Ovary (tissue), 10 donors: ENCODE measurements at regions of chr1 and their contacts with region 1.

Region 1: DNA sequence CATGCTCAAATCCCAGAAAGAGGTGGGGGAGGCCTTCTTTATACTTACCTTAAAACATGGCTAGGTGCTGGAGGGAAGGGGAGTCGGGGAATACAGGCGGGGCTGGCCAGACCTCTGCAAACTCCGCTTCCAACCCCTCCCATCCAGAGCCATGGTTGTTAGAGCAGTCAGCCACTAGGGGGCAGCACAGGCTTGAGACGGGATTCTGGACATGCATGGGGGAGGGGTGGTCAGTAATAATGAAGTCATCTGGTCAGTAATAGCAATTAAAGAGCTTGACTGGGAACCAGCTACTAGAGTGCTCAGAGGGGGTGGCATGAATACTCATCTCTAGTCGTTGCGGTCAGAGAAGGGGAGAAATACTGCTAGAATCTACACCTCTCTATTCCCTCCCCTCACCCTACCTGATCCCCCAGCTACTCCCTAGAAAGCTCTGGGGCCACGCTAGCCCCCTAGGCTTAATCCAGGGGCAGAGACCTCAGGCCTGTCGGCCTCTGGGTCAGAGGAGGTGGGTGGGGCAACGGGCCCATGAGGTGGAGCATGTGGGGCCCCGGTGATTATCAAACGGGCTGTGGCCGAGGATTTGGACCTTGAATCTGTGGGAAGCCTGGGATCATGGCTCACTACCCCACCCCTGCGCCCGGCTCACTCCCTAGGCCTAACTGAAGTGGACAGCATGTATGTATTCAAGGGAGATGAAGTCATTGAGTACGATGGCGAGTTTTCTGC is 2.9 kb downstream of the CASQ1 start:
- DNase-seq: peak; percentile 82 to 91 (median 91)
- H3K4me3 ChIP-seq: no peak overlapping the region
- H3K27ac ChIP-seq: no peak overlapping the region
- H3K4me1 ChIP-seq: peaks cover 1% of the 10 kb centered on the region
- H3K27me3 ChIP-seq: no peaks in the 10 kb centered on the region
- CTCF ChIP-seq: peak; percentile 91 to 98 (median 95)
- EP300 ChIP-seq: no peak
- POLR2A ChIP-seq: no peak

Region 2: GRCh38 chr1:160108888-160109662 is 84.2 kb before region 1 on chr1:
- intact Hi-C with region 1: loop called in 3 of 4 experiments (anchors 5 to 10 kb)
- DNase-seq: peak in 2 of 5 donors; percentile 50 to 77
- H3K4me3 ChIP-seq: no peak overlapping the region
- H3K27ac ChIP-seq: no peak overlapping the region
- H3K4me1 ChIP-seq: peaks cover 16% of the 10 kb centered on the region
- H3K27me3 ChIP-seq: no peaks in the 10 kb centered on the region
- CTCF ChIP-seq: no peak
- EP300 ChIP-seq: no peak
- POLR2A ChIP-seq: no peak

Region 3: DNA sequence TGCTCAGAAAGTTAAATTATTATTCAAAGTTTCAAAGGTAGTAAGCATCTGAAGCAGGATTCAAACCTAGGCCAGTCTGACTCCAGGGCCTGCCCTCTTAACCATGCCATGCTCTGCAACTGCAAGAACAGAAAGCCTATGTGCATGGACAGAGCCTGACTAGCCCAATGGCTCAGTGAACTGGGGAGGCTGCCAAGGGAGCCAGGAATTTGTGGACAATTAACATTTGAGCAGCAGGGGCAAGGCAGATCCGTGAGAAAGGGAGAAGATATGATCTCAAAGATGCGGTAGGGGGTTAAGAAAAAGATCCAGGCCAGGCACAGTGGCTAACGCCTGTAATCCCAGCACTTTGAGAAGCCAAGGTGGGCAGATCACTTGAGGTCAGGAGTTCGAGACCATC is 48.3 kb before region 1 on chr1:
- intact Hi-C with region 1: no loop called
- DNase-seq: no peak
- H3K4me3 ChIP-seq: no peak overlapping the region
- H3K27ac ChIP-seq: no peak overlapping the region
- H3K4me1 ChIP-seq: no peaks in the 10 kb centered on the region
- H3K27me3 ChIP-seq: no peaks in the 10 kb centered on the region
- CTCF ChIP-seq: no peak
- EP300 ChIP-seq: no peak
- POLR2A ChIP-seq: no peak

Region 4: DNA sequence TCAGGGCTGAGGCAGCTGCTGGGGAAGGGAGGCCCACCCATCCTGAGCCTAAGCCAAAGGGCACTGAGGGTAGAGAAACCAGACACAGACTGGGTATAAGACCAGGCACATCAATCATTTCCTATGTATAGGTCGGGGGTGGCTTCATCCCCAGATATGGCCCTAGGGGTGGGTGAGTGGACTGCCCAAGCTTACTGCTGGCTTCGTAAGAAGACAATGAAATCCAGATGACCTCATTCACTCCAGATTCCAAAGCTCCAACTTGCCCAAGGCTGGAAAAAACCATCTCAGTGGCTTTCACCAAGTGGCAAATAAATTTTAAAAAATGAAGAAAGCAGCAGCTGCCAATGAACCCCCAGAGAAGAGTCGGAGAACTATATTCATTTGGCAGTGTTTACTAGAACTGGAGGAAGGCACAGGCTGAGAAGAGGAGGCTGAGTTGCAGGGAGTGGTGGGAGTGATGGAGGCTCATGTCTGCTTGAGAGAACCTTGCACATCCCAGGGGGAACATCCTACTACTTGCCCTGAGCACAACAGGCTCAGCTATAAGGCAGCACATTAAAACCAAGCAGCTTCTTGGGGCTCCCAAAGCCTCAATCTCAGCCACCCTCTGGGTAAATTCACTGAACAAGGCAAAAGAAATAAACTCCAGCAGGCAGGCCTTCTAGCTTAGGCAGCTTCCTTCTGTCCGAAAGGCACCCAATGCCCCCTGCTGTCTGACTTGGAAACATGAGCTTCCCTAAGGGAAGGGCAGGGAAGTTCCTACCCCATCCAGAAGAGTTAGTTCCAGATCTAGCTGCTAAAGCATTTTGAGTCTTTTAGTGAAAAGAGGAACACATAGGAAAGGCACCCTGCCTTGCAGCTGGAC is 26.0 kb after region 1 on chr1:
- intact Hi-C with region 1: loop called in 1 of 4 experiments (anchors 2 kb)
- DNase-seq: peak in 4 of 5 donors; percentile 40 to 62 (median 56)
- H3K4me3 ChIP-seq: no peak overlapping the region
- H3K27ac ChIP-seq: peak overlapping the region in 1 of 2 donors; percentile 26
- H3K4me1 ChIP-seq: peaks cover 2% of the 10 kb centered on the region
- H3K27me3 ChIP-seq: no peaks in the 10 kb centered on the region
- CTCF ChIP-seq: peak; percentile 12 to 50 (median 33)
- EP300 ChIP-seq: no peak
- POLR2A ChIP-seq: no peak

Region 5: DNA sequence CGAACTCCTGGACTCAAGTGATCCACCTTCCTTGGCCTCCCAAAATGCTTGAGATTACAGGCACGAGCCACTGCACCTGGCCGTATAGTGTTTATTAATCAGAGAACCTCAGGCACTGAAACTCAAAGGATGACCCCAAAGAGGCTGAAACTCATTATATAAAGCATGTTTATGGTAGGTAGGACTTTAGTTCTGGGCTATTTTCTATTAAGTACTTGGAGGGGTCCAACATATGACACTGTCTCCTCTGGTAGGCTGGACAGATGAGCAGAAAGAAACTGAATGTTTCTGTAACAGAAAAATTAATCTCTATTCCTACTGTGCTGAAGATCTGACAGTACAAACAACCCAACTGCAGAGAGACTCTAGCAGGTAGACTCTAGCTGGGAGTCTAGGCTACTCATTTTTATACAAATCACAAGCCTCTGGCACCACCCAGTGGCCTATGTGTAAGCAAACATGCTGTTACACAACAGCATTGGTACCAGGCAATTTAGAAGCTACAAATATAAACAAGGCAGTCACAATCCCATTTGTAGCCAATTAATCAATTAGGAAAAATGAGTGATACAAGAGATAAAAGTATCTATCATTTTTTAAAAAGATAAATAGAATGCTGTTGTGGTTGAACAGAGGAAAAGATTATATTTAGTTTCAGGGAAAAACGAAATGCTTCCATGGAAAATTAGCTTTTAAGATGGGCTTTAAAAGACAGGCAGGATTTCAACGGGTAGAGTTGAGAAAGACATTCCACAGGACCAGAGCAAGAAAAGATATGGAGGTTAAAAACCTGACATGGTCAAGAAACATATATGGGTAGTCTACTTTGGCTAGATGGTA is 58.7 kb after region 1 on chr1:
- intact Hi-C with region 1: loop called in 3 of 4 experiments (anchors 5 to 10 kb)
- DNase-seq: peak; percentile 56 to 81 (median 64)
- H3K4me3 ChIP-seq: no peak overlapping the region
- H3K27ac ChIP-seq: no peak overlapping the region
- H3K4me1 ChIP-seq: peaks cover 1% of the 10 kb centered on the region
- H3K27me3 ChIP-seq: no peaks in the 10 kb centered on the region
- CTCF ChIP-seq: peak in 2 of 3 donors; percentile 67 to 80
- EP300 ChIP-seq: no peak
- POLR2A ChIP-seq: no peak

Region 6: GRCh38 chr1:160376525-160377131 is 183.4 kb after region 1 on chr1:
- intact Hi-C with region 1: loop called in 1 of 4 experiments (anchors 10 kb)
- DNase-seq: peak in 1 of 5 donors; percentile 33
- H3K4me3 ChIP-seq: no peak overlapping the region
- H3K27ac ChIP-seq: no peak overlapping the region
- H3K4me1 ChIP-seq: no peaks in the 10 kb centered on the region
- H3K27me3 ChIP-seq: no peaks in the 10 kb centered on the region
- CTCF ChIP-seq: peak; percentile 56 to 68 (median 68)
- EP300 ChIP-seq: no peak
- POLR2A ChIP-seq: no peak